Aorta (tissue), 5 donors: ENCODE measurements at regions of chr5 and their contacts with region 1.

Region 1: GRCh38 chr5:135191084-135191826 is 157.2 kb upstream of the PITX1 start:
- DNase-seq: peak; percentile 81 to 92
- ATAC-seq: peak; percentile 86
- H3K4me3 ChIP-seq: peak overlapping the region in 1 of 2 donors; percentile 48
- H3K27ac ChIP-seq: no peak overlapping the region
- H3K4me1 ChIP-seq: peaks cover 0 to 3% of the 10 kb centered on the region in 2 donors
- H3K27me3 ChIP-seq: no peaks in the 10 kb centered on the region

Region 2: GRCh38 chr5:135013947-135014570 is 177.2 kb before region 1 on chr5:
- intact Hi-C with region 1: loop called in 1 of 2 experiments (anchors 10 kb)
- DNase-seq: peak; percentile 70 to 83
- ATAC-seq: peak; percentile 52
- H3K4me3 ChIP-seq: no peak overlapping the region
- H3K27ac ChIP-seq: peak overlapping the region in 1 of 2 donors; percentile 91
- H3K4me1 ChIP-seq: peaks cover 0 to 8% of the 10 kb centered on the region in 2 donors
- H3K27me3 ChIP-seq: no peaks in the 10 kb centered on the region

Region 3: DNA sequence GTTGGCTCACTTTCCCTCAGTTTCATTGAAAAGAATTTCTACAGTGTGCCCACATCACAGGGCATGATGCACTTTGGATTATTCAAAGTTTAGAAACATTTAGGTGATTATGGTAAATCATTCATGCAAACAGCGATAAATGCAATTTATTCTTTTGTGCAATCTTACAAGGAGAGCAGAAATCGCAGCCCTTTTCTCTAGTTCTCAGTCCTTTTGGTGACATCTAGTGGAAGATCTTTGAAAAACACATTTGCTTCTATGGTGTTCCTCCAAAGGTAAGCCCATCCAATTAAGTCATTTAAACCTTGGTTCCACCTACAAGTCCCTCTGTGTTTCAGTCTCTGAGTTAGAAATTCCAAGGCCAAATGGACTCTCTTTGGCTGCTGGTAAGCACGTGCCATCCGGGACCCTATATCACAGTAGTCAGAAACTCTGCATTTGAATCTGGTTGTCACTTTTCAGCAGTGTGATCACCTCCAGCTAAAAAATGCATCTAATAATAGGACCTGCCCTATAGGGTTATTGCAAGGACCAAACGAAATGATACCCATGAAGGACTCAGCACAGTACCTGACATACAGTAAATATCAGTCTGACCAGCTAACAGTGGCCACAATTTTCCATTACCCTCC is 141.4 kb after region 1 on chr5:
- intact Hi-C with region 1: loop called (anchors 5 kb)
- DNase-seq: no peak
- ATAC-seq: no peak
- H3K4me3 ChIP-seq: no peak overlapping the region
- H3K27ac ChIP-seq: no peak overlapping the region
- H3K4me1 ChIP-seq: no peaks in the 10 kb centered on the region
- H3K27me3 ChIP-seq: no peaks in the 10 kb centered on the region